Activated CD4-positive, alpha-beta memory T cell treated with anti-CD3 and anti-CD28 coated beads, Interleukin-2, amount 10 ng/mL, durations not matched to agents 7 days and 5 days (primary cell): ENCODE measurements at regions of chr2 and their contacts with region 1.

Region 1: GRCh38 chr2:70070541-70071268 is 16.6 kb upstream of the PCBP1 start:
- DNase-seq: peak; percentile 70
- H3K4me3 Mint-ChIP-seq: peak overlapping the region; percentile 63
- H3K27ac Mint-ChIP-seq: peak overlapping the region; percentile 88
- H3K4me1 Mint-ChIP-seq: peaks cover 47% of the 10 kb centered on the region
- H3K27me3 Mint-ChIP-seq: no peaks in the 10 kb centered on the region

Region 2: GRCh38 chr2:70014959-70015358 is 55.7 kb before region 1 on chr2:
- CTCF ChIA-PET with region 1: no interaction called
- POLR2A ChIA-PET with region 1: no interaction called
- DNase-seq: no peak
- H3K4me3 Mint-ChIP-seq: no peak overlapping the region
- H3K27ac Mint-ChIP-seq: no peak overlapping the region
- H3K4me1 Mint-ChIP-seq: peaks cover 28% of the 10 kb centered on the region
- H3K27me3 Mint-ChIP-seq: no peaks in the 10 kb centered on the region

Region 3: GRCh38 chr2:70043252-70043875 is 27.3 kb before region 1 on chr2:
- CTCF ChIA-PET with region 1: interaction called, 49 read pairs
- POLR2A ChIA-PET with region 1: interaction called, 95 read pairs
- DNase-seq: peak; percentile 89
- H3K4me3 Mint-ChIP-seq: peak overlapping the region; percentile 44
- H3K27ac Mint-ChIP-seq: peak overlapping the region; percentile 97
- H3K4me1 Mint-ChIP-seq: peaks cover 75% of the 10 kb centered on the region
- H3K27me3 Mint-ChIP-seq: no peaks in the 10 kb centered on the region

Region 4: GRCh38 chr2:70086838-70087701 is 16.4 kb after region 1 on chr2 and contains the start of gene PCBP1:
- CTCF ChIA-PET with region 1: interaction called, 55 read pairs
- POLR2A ChIA-PET with region 1: interaction called, 274 read pairs
- DNase-seq: peak; percentile 95
- H3K4me3 Mint-ChIP-seq: peak within 1 kb of the TSS; percentile 98
- H3K27ac Mint-ChIP-seq: peak within 1 kb of the TSS; percentile 100
- H3K4me1 Mint-ChIP-seq: peaks cover 59% of the 10 kb centered on the region
- H3K27me3 Mint-ChIP-seq: no peaks in the 10 kb centered on the region
- total RNA-seq, gene PCBP1: 475 to 483 TPM

Region 5: DNA sequence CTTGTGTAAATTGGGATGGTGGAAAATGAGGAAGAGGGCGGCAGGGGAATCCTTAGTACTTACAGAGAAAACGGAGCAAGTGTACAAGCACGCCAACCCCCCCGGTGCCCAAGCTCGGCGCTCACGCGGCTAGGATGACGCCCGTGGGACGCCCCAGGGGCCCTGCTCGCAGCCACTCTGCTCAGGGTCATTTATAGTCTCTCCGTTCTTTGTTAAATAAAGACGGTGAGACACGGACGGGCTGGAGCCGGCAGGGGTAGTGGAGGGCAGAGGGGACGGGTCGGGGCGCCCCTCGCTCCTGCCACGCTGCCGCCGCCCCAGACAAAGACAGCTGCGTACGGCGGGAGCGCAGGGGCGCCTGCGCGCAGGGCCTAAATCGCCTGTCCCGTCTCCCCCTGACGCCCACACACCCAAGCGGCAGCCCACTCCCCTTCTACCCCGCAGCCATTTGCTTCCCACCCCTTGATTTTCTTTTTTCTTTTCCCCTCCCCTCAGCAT is 54.3 kb after region 1 on chr2:
- CTCF ChIA-PET with region 1: interaction called, 6 read pairs
- POLR2A ChIA-PET with region 1: interaction called, 20 read pairs
- DNase-seq: peak; percentile 65
- H3K4me3 Mint-ChIP-seq: peak overlapping the region; percentile 84
- H3K27ac Mint-ChIP-seq: peak overlapping the region; percentile 99
- H3K4me1 Mint-ChIP-seq: peaks cover 71% of the 10 kb centered on the region
- H3K27me3 Mint-ChIP-seq: no peaks in the 10 kb centered on the region

Region 6: DNA sequence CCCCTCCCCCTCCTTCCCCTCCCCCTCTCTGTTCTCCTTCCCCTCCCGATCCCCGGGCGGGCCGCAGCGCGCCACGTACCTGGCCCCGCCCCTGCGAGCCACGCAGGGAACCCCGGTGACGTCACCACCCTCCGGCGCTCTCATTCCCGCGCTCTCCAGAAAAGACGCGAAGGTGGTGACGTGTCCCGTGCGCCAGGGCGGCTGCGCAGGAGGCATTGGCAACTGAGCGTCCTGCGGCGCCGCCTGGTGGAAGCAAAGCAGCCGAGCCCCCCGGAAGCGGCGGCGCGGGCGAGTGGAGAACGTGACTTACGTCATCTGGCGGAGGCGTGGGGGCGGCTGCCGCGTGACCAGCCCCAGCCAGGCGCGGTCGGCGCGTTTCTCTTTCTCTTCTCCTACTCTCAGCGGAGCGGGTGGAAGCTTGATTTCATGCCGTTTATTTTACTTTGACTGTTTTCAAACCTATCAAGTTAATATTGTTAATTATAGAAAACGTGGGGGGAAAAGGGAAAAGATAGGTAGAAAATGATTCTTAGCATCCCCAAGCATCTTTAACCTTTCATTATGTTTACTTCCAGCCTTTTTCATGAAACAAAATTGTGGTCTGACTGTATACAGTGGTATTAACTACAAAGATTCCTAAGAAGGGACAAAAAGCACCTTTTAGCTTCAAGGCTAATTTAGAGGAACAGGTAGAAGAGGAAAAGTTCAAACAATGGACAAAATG is 72.0 kb after region 1 on chr2:
- CTCF ChIA-PET with region 1: interaction called, 35 read pairs
- POLR2A ChIA-PET with region 1: interaction called, 39 read pairs
- DNase-seq: peak; percentile 100
- H3K4me3 Mint-ChIP-seq: peak overlapping the region; percentile 80
- H3K27ac Mint-ChIP-seq: peak overlapping the region; percentile 97
- H3K4me1 Mint-ChIP-seq: peaks cover 71% of the 10 kb centered on the region
- H3K27me3 Mint-ChIP-seq: no peaks in the 10 kb centered on the region